PC-9 (cell line): ENCODE measurements at regions of chr5 and their contacts with region 1.

Region 1: GRCh38 chr5:127564002-127564769 is 46.7 kb downstream of the PRRC1 start:
- DNase-seq: peak; percentile 34 to 63
- H3K4me3 ChIP-seq: no peak overlapping the region
- H3K27ac ChIP-seq: no peak overlapping the region
- H3K4me1 ChIP-seq: no peaks in the 10 kb centered on the region
- H3K27me3 ChIP-seq: no peaks in the 10 kb centered on the region
- CTCF ChIP-seq: peak; percentile 79

Region 2: DNA sequence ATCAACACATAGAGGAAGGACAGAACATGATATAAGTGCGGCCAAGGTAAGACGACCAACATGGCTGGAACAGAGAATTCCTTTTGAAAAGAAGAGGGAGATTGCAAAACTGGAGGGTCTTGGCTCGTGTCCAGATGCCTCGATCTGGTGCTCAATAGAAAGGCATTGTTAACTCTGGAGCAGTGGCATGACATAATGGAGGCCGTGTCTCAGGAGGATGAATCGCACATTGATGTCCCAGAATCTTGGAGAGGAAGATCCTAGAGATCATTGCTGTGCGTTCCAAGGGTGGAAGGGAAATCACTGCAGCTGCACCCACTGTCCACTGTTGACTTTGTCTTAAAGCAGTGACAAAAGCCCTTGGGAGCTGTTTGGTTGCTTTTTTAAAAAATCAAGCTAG is 1110.1 kb before region 1 on chr5:
- CTCF ChIA-PET with region 1: no interaction called
- POLR2A ChIA-PET with region 1: no interaction called
- intact Hi-C with region 1: no loop called
- DNase-seq: no peak
- H3K4me3 ChIP-seq: no peak overlapping the region
- H3K27ac ChIP-seq: no peak overlapping the region
- H3K4me1 ChIP-seq: no peaks in the 10 kb centered on the region
- H3K27me3 ChIP-seq: no peaks in the 10 kb centered on the region
- CTCF ChIP-seq: no peak

Region 3: GRCh38 chr5:128014578-128014977 is 450.4 kb after region 1 on chr5:
- CTCF ChIA-PET with region 1: no interaction called
- POLR2A ChIA-PET with region 1: no interaction called
- intact Hi-C with region 1: no loop called
- DNase-seq: no peak
- H3K4me3 ChIP-seq: no peak overlapping the region
- H3K27ac ChIP-seq: no peak overlapping the region
- H3K4me1 ChIP-seq: no peaks in the 10 kb centered on the region
- H3K27me3 ChIP-seq: no peaks in the 10 kb centered on the region
- CTCF ChIP-seq: no peak

Region 4: GRCh38 chr5:128213340-128213739 is 649.2 kb after region 1 on chr5:
- CTCF ChIA-PET with region 1: no interaction called
- POLR2A ChIA-PET with region 1: no interaction called
- intact Hi-C with region 1: loop called (anchors 2 kb)
- DNase-seq: peak; percentile 40 to 52
- H3K4me3 ChIP-seq: no peak overlapping the region
- H3K27ac ChIP-seq: no peak overlapping the region
- H3K4me1 ChIP-seq: no peaks in the 10 kb centered on the region
- H3K27me3 ChIP-seq: no peaks in the 10 kb centered on the region
- CTCF ChIP-seq: peak; percentile 88

Region 5: DNA sequence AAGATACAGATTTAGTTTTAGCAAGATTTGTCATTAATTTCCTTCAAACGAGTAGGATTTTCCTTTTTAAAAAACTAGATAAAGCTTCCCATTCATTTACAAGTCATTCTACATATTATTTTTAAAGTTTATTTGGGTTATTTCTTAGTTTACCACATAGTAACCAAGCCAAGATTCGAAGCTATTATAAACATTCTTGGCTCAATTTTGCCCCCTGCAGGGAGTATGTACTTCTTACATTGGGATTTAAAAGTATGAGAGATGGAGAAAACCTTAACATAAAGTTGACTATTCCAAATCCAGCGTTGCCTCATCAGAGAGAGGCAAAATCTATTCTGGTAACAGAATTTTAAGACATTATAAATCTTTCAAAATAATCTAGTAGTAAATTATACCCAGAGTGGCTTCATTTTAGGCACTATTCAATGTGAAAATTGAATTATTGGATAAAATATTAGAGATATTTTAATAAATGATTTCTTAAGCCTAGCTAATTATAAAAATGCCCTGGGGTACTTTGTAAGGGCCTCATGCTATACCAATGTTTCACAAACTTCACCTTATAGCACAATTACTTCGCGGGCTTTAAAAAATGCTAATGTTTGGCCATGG is 934.8 kb after region 1 on chr5:
- CTCF ChIA-PET with region 1: no interaction called
- POLR2A ChIA-PET with region 1: no interaction called
- intact Hi-C with region 1: loop called (anchors 2 kb)
- DNase-seq: no peak
- H3K4me3 ChIP-seq: no peak overlapping the region
- H3K27ac ChIP-seq: no peak overlapping the region
- H3K4me1 ChIP-seq: no peaks in the 10 kb centered on the region
- H3K27me3 ChIP-seq: no peaks in the 10 kb centered on the region
- CTCF ChIP-seq: peak; percentile 67

Region 6: GRCh38 chr5:128674825-128675446 is 1110.8 kb after region 1 on chr5:
- CTCF ChIA-PET with region 1: no interaction called
- POLR2A ChIA-PET with region 1: no interaction called
- intact Hi-C with region 1: loop called (anchors 10 kb)
- DNase-seq: peak in 1 of 2 experiments; percentile 37
- H3K4me3 ChIP-seq: no peak overlapping the region
- H3K27ac ChIP-seq: no peak overlapping the region
- H3K4me1 ChIP-seq: no peaks in the 10 kb centered on the region
- H3K27me3 ChIP-seq: no peaks in the 10 kb centered on the region
- CTCF ChIP-seq: peak; percentile 71

Region 7: GRCh38 chr5:128844354-128844923 is 1280.3 kb after region 1 on chr5:
- CTCF ChIA-PET with region 1: no interaction called
- POLR2A ChIA-PET with region 1: no interaction called
- intact Hi-C with region 1: loop called (anchors 1 kb)
- DNase-seq: no peak
- H3K4me3 ChIP-seq: no peak overlapping the region
- H3K27ac ChIP-seq: no peak overlapping the region
- H3K4me1 ChIP-seq: no peaks in the 10 kb centered on the region
- H3K27me3 ChIP-seq: no peaks in the 10 kb centered on the region
- CTCF ChIP-seq: peak; percentile 65; the same call in 1 of the 2 replicates

Region 8: GRCh38 chr5:128905571-128906110 is 1341.5 kb after region 1 on chr5:
- CTCF ChIA-PET with region 1: no interaction called
- POLR2A ChIA-PET with region 1: no interaction called
- intact Hi-C with region 1: loop called (anchors 5 kb)
- DNase-seq: peak; percentile 10 to 48
- H3K4me3 ChIP-seq: no peak overlapping the region
- H3K27ac ChIP-seq: no peak overlapping the region
- H3K4me1 ChIP-seq: no peaks in the 10 kb centered on the region
- H3K27me3 ChIP-seq: no peaks in the 10 kb centered on the region
- CTCF ChIP-seq: peak; percentile 88